Activated naive CD4-positive, alpha-beta T cell treated with anti-CD3 and anti-CD28 coated beads for 36 hours (primary cell): ENCODE measurements at regions of chr1 and their contacts with region 1.

Region 1: GRCh38 chr1:170200621-170201397 is 55.0 kb downstream of the NTMT2 start:
- DNase-seq: no peak
- H3K4me3 Mint-ChIP-seq: no peak overlapping the region
- H3K27ac Mint-ChIP-seq: no peak overlapping the region
- H3K4me1 Mint-ChIP-seq: no peaks in the 10 kb centered on the region
- H3K27me3 Mint-ChIP-seq: peaks cover 14% of the 10 kb centered on the region

Region 2: GRCh38 chr1:169858467-169858866 is 342.3 kb before region 1 on chr1:
- CTCF ChIA-PET with region 1: no interaction called
- intact Hi-C with region 1: no loop called
- DNase-seq: no peak
- H3K4me3 Mint-ChIP-seq: no peak overlapping the region
- H3K27ac Mint-ChIP-seq: no peak overlapping the region
- H3K4me1 Mint-ChIP-seq: no peaks in the 10 kb centered on the region
- H3K27me3 Mint-ChIP-seq: no peaks in the 10 kb centered on the region

Region 3: GRCh38 chr1:169964206-169964605 is 236.6 kb before region 1 on chr1:
- CTCF ChIA-PET with region 1: no interaction called
- intact Hi-C with region 1: no loop called
- DNase-seq: no peak
- H3K4me3 Mint-ChIP-seq: no peak overlapping the region
- H3K27ac Mint-ChIP-seq: no peak overlapping the region
- H3K4me1 Mint-ChIP-seq: no peaks in the 10 kb centered on the region
- H3K27me3 Mint-ChIP-seq: no peaks in the 10 kb centered on the region

Region 4: DNA sequence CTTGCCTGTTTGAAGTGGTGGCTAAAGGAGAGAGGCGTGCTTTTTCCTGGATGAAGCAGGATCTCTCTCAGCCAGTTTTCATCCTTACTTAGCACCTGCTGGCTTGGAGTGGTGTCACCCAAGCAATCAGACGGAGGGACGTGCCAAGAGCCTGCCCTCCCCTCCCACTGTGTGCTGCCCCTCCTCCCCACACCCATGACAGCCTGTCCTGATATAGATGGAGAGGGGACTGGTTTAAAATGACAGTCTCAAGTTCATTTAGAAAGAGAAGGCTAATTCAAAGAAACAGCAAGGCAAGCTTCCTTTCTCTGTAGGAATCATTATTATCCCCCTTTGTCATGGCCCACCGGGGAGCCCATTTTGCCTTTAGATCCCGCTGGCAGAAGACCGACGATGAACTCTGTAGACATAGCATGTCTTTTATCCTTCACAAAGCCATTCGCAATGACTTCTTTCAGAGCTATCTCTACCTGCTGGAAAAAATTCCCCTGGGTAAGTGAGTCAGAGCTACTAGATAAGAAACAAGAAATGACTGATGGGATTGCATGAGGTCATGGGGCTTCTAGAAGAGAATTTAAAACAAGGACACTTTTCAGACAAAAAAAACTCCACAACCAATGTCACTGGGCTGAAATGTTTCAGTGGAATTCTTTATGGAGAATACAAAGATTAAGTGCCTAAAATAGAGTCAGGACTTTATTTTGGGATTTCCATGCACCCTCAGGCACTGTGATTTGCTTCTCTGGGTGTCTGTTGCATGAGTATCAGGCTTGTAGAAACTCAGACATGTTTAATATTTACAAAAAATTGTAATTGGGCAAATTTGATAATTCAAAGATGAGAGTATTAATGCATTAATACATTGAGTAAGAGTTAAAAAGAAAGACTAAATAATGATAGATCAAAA is 54.8 kb before region 1 on chr1 and contains the start of gene NTMT2:
- CTCF ChIA-PET with region 1: no interaction called
- intact Hi-C with region 1: loop called (anchors 1 kb)
- DNase-seq: peak; percentile 9
- H3K4me3 Mint-ChIP-seq: no peak within 1 kb of the TSS
- H3K27ac Mint-ChIP-seq: no peak within 1 kb of the TSS
- H3K4me1 Mint-ChIP-seq: peaks cover 19% of the 10 kb centered on the region
- H3K27me3 Mint-ChIP-seq: peaks cover 3% of the 10 kb centered on the region
- total RNA-seq, gene NTMT2: not detected

Region 5: GRCh38 chr1:170340343-170340707 is 139.5 kb after region 1 on chr1:
- CTCF ChIA-PET with region 1: no interaction called
- intact Hi-C with region 1: no loop called
- DNase-seq: no peak
- H3K4me3 Mint-ChIP-seq: no peak overlapping the region
- H3K27ac Mint-ChIP-seq: no peak overlapping the region
- H3K4me1 Mint-ChIP-seq: no peaks in the 10 kb centered on the region
- H3K27me3 Mint-ChIP-seq: peaks cover 4% of the 10 kb centered on the region